Dorsolateral prefrontal cortex (tissue), 120 donors: ENCODE measurements at regions of chr4 and their contacts with region 1.

Region 1: GRCh38 chr4:143455211-143455610 is 58.3 kb upstream of the SMARCA5 start:
- DNase-seq: no peak
- H3K4me3 ChIP-seq: no peak overlapping the region
- H3K27ac ChIP-seq: peak overlapping the region in 47 of 59 donors; percentile 0 to 77 (median 50)
- H3K27me3 ChIP-seq: no peaks in the 10 kb centered on the region
- CTCF ChIP-seq: no peak

Region 2: DNA sequence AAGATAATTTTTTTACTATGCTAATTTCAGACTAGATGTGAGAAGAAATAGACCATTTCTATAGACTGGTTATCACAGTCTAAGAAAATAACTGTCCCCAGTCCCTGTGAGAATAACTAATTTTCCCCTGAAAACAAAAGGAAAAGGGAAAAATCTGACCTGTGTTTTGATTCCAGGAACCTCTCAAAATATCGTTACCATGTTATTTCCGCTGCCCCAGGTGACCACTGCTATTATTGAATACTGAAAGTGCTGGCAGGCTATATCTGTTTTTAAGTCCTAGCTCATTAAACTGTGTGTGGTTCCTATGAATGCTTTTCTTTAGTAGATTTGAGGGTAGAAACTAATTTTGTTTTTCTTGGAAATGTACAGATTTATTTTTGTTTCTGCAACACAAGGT is 35.0 kb before region 1 on chr4:
- intact Hi-C with region 1: loop called in 1 of 2 experiments (anchors 5 kb)
- DNase-seq: no peak
- H3K4me3 ChIP-seq: peak overlapping the region in 1 of 59 donors; percentile 9
- H3K27ac ChIP-seq: peak overlapping the region in 58 of 59 donors; percentile 19 to 99 (median 96)
- H3K27me3 ChIP-seq: no peaks in the 10 kb centered on the region
- CTCF ChIP-seq: no peak